ENCODE measurements at regions of chr16 and their contacts with region 1.

Region 1: DNA sequence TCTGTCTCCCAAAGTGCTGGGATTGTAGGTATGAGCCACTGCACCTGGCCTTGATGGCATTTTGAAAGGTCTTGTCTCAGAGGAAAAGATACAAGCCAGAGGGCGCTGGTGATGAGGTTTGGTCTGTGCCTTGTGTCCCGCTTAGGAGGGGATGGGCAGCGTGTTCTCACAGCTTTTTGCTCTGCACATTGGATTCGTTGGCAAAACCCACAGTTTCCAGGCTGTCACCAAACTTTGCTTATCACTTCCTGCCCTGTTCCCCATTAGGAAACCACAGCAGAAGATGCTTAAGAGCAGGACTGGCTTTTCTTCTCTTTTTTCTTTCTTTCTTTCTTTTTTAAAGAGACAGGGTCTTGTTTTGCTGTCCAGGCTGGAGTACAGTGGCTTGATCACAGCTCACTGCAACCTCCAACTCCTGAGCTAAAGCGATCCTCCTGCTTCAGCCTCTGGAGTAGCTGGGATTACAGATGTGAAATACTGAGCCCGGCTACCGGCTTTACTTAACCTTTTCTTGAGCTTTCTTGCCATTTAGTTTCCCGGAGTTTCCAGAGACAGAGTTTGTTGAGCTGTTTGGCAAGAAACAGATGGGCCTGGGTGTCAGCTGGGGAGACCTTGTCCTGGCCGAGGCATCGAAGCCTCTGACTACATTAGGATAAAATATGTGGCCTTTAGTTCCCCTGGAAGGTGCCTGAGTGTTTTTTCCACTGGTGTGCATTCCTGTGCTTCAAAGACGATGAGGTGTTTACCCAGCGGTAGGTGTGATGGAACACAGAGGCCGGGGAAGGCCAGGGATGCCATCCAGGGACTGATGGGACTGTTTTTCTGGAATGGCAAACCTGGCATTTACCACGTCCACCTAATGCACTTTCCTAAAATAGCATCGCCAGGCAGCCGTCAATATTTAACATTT is 112.9 kb downstream of the ABCC1 start:
- DNase-seq: no peak
- H3K4me3 ChIP-seq: no peak overlapping the region
- H3K27ac ChIP-seq: peak overlapping the region; percentile 37 to 45
- H3K4me1 ChIP-seq: no peaks in the 10 kb centered on the region
- H3K27me3 ChIP-seq: no peaks in the 10 kb centered on the region
- CTCF ChIP-seq: no peak
- POLR2A ChIP-seq: no peak

Region 2: DNA sequence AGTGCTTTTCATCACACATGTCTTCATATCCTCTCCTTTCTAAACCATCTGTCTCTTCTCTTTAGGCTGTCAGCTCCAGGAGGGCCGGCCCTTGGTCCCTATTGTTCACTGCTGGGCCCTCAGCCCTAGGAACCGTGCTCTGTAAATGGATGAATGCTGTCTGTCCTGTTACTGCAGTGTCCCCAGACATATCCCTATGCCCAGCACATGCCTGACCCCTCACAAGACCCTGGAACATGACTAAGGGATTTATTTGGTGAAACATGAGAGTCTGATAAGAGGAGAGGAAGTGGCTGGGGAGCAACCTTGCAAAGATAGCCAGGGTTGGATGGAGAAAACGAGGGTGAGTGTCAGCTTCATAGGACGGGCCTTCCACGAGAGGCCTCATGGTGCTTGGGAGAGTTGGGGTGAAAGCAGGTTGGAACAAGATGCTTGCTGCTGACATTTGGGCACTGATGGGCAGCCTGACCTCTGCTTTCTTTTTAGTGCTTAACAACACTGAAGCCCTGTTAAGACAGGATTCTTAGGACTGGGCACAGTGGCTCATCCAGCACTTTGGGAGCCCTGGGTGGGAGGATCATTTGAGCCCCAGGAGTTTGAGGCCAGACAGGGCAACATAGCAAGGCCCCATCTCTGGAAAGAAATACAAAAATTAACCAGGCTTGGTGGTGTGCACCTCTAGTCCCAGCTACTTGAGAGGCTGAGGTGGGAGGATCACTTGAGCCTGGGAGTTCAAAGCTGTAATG is 73.8 kb before region 1 on chr16:
- intact Hi-C with region 1: no loop called
- DNase-seq: no peak
- H3K4me3 ChIP-seq: no peak overlapping the region
- H3K27ac ChIP-seq: no peak overlapping the region
- H3K4me1 ChIP-seq: no peaks in the 10 kb centered on the region
- H3K27me3 ChIP-seq: no peaks in the 10 kb centered on the region
- CTCF ChIP-seq: no peak
- POLR2A ChIP-seq: no peak

Region 3: DNA sequence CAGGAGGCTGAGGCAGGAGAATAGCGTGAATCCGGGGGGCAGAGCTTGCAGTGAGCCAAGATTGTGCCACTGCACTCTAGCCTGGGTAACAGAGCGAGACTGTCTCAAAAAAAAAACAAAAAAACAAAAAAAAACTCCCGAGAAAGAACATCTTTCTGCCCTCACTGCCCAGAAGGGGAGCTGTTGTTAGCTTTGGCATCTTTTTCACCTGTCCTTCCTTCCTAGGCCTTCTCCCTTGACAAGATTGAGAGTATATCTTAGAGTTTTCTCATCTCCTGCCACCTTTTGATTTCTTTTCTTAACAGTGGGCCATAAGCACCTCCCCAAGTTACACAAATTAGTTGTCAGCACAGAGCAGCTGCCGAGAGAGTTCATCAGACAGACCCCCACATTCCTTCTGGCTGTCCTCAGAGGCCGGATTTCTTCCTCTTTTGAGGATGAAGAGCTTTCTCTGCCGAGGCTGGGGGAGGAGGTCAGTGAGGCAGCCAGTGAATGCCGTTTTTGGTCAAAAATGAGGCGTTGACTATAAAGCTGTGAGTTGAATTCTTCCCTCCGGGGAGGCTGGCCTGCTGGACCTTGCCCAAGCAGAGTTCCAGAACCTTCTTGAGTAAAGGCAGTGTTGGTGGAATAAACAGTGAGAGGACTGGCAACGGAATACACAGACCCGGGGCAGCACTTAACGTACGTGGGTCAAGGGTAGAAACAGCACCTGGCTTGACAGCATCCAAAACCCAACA is 34.0 kb after region 1 on chr16:
- intact Hi-C with region 1: loop called (anchors 2 kb)
- DNase-seq: peak; percentile 24
- H3K4me3 ChIP-seq: no peak overlapping the region
- H3K27ac ChIP-seq: peak overlapping the region; percentile 66 to 79
- H3K4me1 ChIP-seq: peaks cover 13% of the 10 kb centered on the region
- H3K27me3 ChIP-seq: no peaks in the 10 kb centered on the region
- CTCF ChIP-seq: peak in 1 of 4 experiments; percentile 21
- POLR2A ChIP-seq: no peak

Region 4: DNA sequence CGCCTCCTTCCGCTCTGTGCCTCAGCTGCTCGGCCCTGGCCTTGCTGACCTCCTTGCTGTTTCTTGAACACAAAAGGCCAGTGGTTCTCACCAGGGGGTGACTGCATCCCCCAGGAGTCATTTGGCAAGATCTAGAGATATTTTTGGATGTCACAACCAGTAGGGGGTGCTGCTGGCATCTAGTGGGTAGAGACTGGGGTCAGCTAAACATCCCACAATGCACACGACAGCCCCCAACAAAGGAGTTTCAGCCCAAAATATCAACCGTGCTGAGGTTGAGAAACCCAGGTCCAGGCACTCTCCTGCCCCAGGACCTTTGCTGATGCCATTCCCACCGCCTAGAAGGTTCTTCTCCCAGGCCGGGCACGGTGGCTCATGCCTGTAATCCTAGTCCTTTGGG is 121.3 kb after region 1 on chr16:
- intact Hi-C with region 1: no loop called
- DNase-seq: no peak
- H3K4me3 ChIP-seq: no peak overlapping the region
- H3K27ac ChIP-seq: no peak overlapping the region
- H3K4me1 ChIP-seq: no peaks in the 10 kb centered on the region
- H3K27me3 ChIP-seq: no peaks in the 10 kb centered on the region
- CTCF ChIP-seq: no peak
- POLR2A ChIP-seq: no peak

Measured in prostate gland (tissue), 2 donors.